CD8-positive, alpha-beta T cell (primary cell): ENCODE measurements at regions of chr22 and their contacts with region 1.

Region 1: DNA sequence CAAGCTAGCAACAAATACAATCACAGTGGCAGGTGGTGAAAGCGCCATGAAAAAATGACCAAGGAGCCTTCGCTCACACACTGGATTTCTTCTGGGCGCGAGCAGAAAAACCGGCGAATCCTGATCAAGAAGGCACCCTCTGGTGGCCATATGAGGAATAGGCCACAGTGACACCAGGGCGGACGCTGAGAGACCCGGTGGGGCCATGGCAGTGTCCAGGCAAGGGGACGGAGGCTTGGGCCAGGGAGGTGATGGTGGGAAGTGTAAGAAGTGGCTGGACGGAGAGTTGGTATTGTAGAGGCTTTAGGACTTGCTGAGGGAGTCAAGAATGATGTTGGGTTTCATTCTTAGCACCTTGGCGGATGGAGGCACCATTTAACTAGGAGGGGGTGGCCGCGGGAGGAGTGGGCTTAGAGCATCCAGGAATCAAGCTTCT is 16.9 kb upstream of the RAC2 start:
- DNase-seq: peak in 7 of 9 experiments; percentile 44 to 82 (median 66)
- ATAC-seq: peak; percentile 90
- H3K4me3 ChIP-seq: no peak overlapping the region
- H3K4me3 Mint-ChIP-seq: peak overlapping the region; percentile 1
- H3K27ac ChIP-seq: no peak overlapping the region
- H3K27ac Mint-ChIP-seq: no peak overlapping the region
- H3K4me1 ChIP-seq: peaks cover 23% of the 10 kb centered on the region
- H3K4me1 Mint-ChIP-seq: peaks cover 21% of the 10 kb centered on the region
- H3K27me3 ChIP-seq: no peaks in the 10 kb centered on the region
- H3K27me3 Mint-ChIP-seq: no peaks in the 10 kb centered on the region
- CTCF ChIP-seq: peak; percentile 97

Region 2: DNA sequence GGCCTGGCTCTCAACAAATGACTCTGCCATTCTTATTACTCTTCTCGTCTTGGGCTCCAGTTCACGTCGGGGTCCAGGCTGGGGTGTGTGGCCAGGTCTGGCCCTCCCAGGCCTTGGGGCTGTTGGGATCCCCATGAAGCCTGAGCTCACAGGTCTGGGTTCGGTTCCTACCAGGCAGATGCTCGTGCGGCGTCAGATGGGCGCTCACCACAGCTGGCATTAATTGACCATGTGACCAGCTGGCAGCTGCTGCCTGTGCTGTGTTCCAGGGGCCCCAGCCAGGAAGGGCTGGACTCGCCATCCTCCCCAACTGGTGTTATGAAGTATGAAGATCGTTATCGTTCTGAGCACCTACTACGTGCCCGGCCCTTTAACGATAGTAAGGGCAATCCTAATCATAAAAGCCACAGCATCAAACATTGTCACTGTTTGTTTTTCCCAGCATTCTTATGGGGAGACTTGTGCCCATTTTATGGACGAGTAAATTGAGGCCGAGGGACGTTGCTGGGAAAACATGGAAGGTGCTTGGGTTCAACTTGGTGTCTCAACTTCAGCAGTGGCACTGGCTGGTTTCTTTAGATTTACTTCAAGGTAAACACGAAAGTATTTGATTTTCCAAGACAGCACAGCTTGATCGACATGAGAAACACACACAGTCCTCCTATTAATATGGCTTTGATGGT is 530.6 kb before region 1 on chr22:
- CTCF ChIA-PET with region 1: no interaction called
- POLR2A ChIA-PET with region 1: no interaction called
- intact Hi-C with region 1: no loop called
- DNase-seq: no peak
- ATAC-seq: no peak
- H3K4me3 ChIP-seq: no peak overlapping the region
- H3K4me3 Mint-ChIP-seq: no peak overlapping the region
- H3K27ac ChIP-seq: no peak overlapping the region
- H3K27ac Mint-ChIP-seq: no peak overlapping the region
- H3K4me1 ChIP-seq: no peaks in the 10 kb centered on the region
- H3K4me1 Mint-ChIP-seq: no peaks in the 10 kb centered on the region
- H3K27me3 ChIP-seq: no peaks in the 10 kb centered on the region
- H3K27me3 Mint-ChIP-seq: peaks cover 31% of the 10 kb centered on the region
- CTCF ChIP-seq: no peak

Region 3: DNA sequence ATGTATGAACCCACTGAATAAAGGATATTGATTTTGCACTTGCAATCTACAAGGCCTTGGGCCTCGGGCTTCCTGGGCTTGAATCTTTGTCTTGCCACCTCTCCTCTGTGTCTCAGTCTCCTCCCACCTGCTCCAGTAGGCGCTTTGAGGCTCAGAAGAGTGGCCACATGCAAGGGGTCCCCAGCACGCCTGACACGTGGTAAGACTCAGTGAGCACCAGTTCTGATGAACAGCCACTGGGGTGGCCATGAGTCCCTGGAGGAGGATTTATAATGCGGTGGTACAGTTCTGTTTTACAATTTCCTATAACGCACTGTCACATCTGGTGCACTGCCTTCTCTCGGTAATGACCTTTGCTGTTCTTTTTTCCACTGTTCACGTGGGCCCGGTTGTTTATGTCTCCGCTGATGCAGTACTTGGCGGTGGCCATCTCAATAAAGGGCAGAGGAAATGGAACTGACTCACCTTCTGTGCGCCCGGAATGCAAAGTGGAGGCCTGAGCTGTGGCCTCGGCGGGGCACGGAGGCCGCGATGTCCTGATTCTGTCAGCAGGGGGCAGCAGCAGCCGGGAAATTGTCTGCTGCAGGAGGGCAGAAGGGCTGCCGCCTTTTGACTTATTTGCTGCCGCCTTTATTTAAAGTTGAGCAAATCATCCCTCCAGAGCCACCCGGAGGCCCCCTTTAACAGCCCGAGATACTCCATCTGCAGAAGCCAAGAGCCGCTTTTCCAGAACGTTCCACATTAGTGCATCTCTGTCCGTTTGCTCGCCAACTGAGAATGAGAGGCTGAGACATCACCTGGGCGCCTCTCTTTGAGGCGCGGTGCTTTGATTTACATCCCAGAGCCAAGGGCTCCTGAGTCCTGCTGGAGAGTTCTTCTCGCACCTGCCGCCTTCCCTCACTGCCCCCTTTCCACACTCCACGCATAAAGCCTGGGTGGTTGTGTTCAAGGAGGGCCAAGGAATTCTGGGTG is 479.0 kb before region 1 on chr22:
- CTCF ChIA-PET with region 1: interaction called, 7 read pairs
- POLR2A ChIA-PET with region 1: no interaction called
- intact Hi-C with region 1: loop called (anchors 2 to 5 kb)
- DNase-seq: peak; percentile 71 to 93 (median 85)
- ATAC-seq: peak; percentile 96
- H3K4me3 ChIP-seq: no peak overlapping the region
- H3K4me3 Mint-ChIP-seq: no peak overlapping the region
- H3K27ac ChIP-seq: no peak overlapping the region
- H3K27ac Mint-ChIP-seq: peak overlapping the region; percentile 41
- H3K4me1 ChIP-seq: peaks cover 11% of the 10 kb centered on the region
- H3K4me1 Mint-ChIP-seq: peaks cover 16% of the 10 kb centered on the region
- H3K27me3 ChIP-seq: peaks cover 0 to 2% of the 10 kb centered on the region in 2 experiments
- H3K27me3 Mint-ChIP-seq: peaks cover 2% of the 10 kb centered on the region
- CTCF ChIP-seq: peak; percentile 95

Region 4: GRCh38 chr22:37176218-37177091 is 84.5 kb before region 1 on chr22:
- CTCF ChIA-PET with region 1: interaction called, 10 read pairs
- POLR2A ChIA-PET with region 1: no interaction called
- intact Hi-C with region 1: no loop called
- DNase-seq: peak in 1 of 9 experiments; percentile 39
- ATAC-seq: peak; percentile 51
- H3K4me3 ChIP-seq: no peak overlapping the region
- H3K4me3 Mint-ChIP-seq: peak overlapping the region; percentile 50
- H3K27ac ChIP-seq: no peak overlapping the region
- H3K27ac Mint-ChIP-seq: peak overlapping the region; percentile 77
- H3K4me1 ChIP-seq: peaks cover 16% of the 10 kb centered on the region
- H3K4me1 Mint-ChIP-seq: peaks cover 34% of the 10 kb centered on the region
- H3K27me3 ChIP-seq: no peaks in the 10 kb centered on the region
- H3K27me3 Mint-ChIP-seq: no peaks in the 10 kb centered on the region
- CTCF ChIP-seq: no peak

Region 5: GRCh38 chr22:37218771-37219411 is 42.0 kb before region 1 on chr22:
- CTCF ChIA-PET with region 1: interaction called, 43 read pairs
- POLR2A ChIA-PET with region 1: interaction called, 3 read pairs
- intact Hi-C with region 1: no loop called
- DNase-seq: peak in 8 of 9 experiments; percentile 43 to 92 (median 78)
- ATAC-seq: peak; percentile 79
- H3K4me3 ChIP-seq: peak overlapping the region; percentile 23 to 52
- H3K4me3 Mint-ChIP-seq: peak overlapping the region; percentile 74
- H3K27ac ChIP-seq: peak overlapping the region; percentile 54 to 60
- H3K27ac Mint-ChIP-seq: peak overlapping the region; percentile 95
- H3K4me1 ChIP-seq: peaks cover 79% of the 10 kb centered on the region
- H3K4me1 Mint-ChIP-seq: peaks cover 90% of the 10 kb centered on the region
- H3K27me3 ChIP-seq: no peaks in the 10 kb centered on the region
- H3K27me3 Mint-ChIP-seq: no peaks in the 10 kb centered on the region
- CTCF ChIP-seq: no peak

Region 6: DNA sequence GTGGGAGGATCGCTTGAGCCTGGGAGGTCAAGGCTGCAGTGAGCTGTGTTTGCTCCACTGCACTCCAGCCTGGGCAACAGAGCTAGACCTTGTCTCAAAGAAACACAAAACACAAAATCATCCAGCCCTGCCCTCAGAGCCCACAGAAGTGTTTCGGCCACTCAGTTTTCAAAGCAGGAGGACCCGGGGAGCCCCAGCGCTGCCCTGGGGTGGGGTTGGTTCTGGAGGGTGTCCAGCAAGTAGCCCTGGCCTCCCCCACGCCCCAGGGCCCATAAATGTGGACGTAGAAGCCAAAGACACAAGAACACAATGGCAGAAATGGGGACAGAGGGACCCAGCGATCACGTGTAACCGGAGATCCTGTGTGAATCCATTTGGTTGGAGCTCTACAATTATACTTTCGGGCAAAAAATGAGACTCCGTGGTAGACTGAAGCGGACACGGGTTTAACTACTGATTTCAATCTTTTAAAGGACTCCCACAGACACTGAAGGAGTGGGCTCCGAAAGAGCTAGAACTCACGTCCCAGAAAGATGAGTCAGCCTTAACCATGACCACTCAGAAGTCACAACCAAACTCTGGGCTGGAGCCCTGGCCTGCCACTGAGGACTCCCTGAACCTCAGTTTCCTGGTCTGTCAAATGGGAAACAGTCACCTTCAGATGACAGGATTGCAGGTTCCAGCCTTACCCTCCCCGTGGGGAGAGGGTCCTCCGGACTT is 12.4 kb after region 1 on chr22:
- CTCF ChIA-PET with region 1: interaction called, 30 read pairs
- POLR2A ChIA-PET with region 1: no interaction called
- intact Hi-C with region 1: no loop called
- DNase-seq: no peak
- ATAC-seq: no peak
- H3K4me3 ChIP-seq: no peak overlapping the region
- H3K4me3 Mint-ChIP-seq: no peak overlapping the region
- H3K27ac ChIP-seq: no peak overlapping the region
- H3K27ac Mint-ChIP-seq: no peak overlapping the region
- H3K4me1 ChIP-seq: peaks cover 10% of the 10 kb centered on the region
- H3K4me1 Mint-ChIP-seq: peaks cover 11% of the 10 kb centered on the region
- H3K27me3 ChIP-seq: no peaks in the 10 kb centered on the region
- H3K27me3 Mint-ChIP-seq: no peaks in the 10 kb centered on the region
- CTCF ChIP-seq: no peak

Region 7: GRCh38 chr22:37309211-37310074 is 48.5 kb after region 1 on chr22:
- CTCF ChIA-PET with region 1: interaction called, 114 read pairs
- POLR2A ChIA-PET with region 1: interaction called, 4 read pairs
- intact Hi-C with region 1: no loop called
- DNase-seq: peak in 8 of 9 experiments; percentile 40 to 84 (median 70)
- ATAC-seq: peak; percentile 50
- H3K4me3 ChIP-seq: peak overlapping the region; percentile 7 to 42
- H3K4me3 Mint-ChIP-seq: peak overlapping the region; percentile 60
- H3K27ac ChIP-seq: peak overlapping the region; percentile 39 to 51
- H3K27ac Mint-ChIP-seq: peak overlapping the region; percentile 99
- H3K4me1 ChIP-seq: peaks cover 72% of the 10 kb centered on the region
- H3K4me1 Mint-ChIP-seq: peaks cover 86% of the 10 kb centered on the region
- H3K27me3 ChIP-seq: no peaks in the 10 kb centered on the region
- H3K27me3 Mint-ChIP-seq: no peaks in the 10 kb centered on the region
- CTCF ChIP-seq: no peak

Region 8: GRCh38 chr22:37457093-37457893 is 196.4 kb after region 1 on chr22:
- CTCF ChIA-PET with region 1: interaction called, 47 read pairs
- POLR2A ChIA-PET with region 1: interaction called, 4 read pairs
- intact Hi-C with region 1: no loop called
- DNase-seq: peak; percentile 72 to 90 (median 83)
- ATAC-seq: peak; percentile 98
- H3K4me3 ChIP-seq: no peak overlapping the region
- H3K4me3 Mint-ChIP-seq: no peak overlapping the region
- H3K27ac ChIP-seq: no peak overlapping the region
- H3K27ac Mint-ChIP-seq: no peak overlapping the region
- H3K4me1 ChIP-seq: no peaks in the 10 kb centered on the region
- H3K4me1 Mint-ChIP-seq: no peaks in the 10 kb centered on the region
- H3K27me3 ChIP-seq: no peaks in the 10 kb centered on the region
- H3K27me3 Mint-ChIP-seq: no peaks in the 10 kb centered on the region
- CTCF ChIP-seq: peak; percentile 82